Calu3 (cell line): ENCODE measurements at regions of chr2 and their contacts with region 1.

Region 1: DNA sequence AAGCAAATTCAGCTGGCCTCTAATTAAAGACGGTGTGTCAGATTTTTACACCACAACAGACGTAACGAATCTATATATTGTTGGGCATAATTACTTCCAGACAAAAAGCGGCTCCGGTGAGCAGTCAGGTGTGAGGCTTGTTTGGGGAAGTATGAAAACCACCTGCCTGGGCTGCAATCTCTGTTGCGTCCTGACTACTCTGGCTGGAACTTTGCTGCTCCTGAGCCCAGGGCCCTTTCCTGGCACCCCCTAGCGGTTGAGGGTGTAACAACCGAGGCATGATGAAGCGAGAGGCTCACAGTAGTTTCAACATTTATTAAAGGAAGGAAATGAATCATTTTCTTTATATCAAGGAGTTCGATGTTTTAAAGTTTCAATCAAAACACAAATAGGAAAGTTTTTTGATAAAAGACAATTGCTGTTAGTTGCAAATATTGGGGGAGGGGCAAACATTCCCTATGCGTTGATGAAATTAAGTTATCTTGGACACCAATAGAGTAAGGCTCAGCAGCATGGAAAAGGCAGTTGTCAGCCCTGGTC is 10.6 kb upstream of the ITGB6 start:
- DNase-seq: peak; percentile 92
- H3K4me3 Mint-ChIP-seq: peak overlapping the region; percentile 12
- H3K27ac Mint-ChIP-seq: peak overlapping the region; percentile 84
- H3K4me1 Mint-ChIP-seq: peaks cover 76% of the 10 kb centered on the region
- H3K27me3 Mint-ChIP-seq: no peaks in the 10 kb centered on the region
- CTCF ChIP-seq: peak; percentile 83

Region 2: DNA sequence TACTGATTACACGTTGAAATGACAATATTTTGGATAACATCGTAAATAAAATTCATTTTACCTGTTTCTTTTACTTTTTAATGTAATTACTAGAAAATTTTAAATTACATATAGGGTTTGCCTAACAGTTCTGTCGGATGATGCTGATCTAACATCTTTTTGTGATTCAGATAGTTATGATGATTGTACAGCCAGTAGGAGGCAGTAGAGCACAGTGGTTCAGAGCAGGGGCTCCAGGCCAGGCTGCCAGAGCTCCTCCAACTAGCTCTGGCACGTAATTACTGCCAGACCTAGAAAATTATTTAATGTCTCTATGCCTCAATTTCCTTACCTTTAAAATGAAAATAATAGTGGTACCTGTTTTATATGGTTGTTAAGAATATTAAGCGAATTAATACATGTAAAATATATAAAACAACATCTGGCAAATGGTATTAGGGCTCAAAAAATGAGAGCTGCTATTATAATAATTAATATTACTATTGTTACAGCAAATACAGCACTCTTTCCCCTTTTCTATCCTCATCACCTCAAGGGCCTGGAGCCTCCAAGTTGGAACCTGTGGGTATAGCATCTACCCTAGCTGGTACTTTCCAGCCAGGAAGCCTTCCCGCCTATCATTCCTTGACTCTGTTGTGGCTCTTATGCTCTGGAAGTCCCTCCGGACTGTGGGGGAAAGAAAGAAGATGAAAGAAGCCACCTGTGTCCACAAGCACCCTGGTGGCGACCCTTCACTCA is 100.6 kb before region 1 on chr2:
- CTCF ChIA-PET with region 1: no interaction called
- intact Hi-C with region 1: loop called (anchors 2 kb)
- DNase-seq: peak; percentile 75
- H3K4me3 Mint-ChIP-seq: no peak overlapping the region
- H3K27ac Mint-ChIP-seq: no peak overlapping the region
- H3K4me1 Mint-ChIP-seq: no peaks in the 10 kb centered on the region
- H3K27me3 Mint-ChIP-seq: no peaks in the 10 kb centered on the region
- CTCF ChIP-seq: peak; percentile 74

Region 3: GRCh38 chr2:160166002-160166401 is 44.7 kb before region 1 on chr2:
- CTCF ChIA-PET with region 1: interaction called, 3 read pairs
- intact Hi-C with region 1: loop called (anchors 2 kb)
- DNase-seq: no peak
- H3K4me3 Mint-ChIP-seq: no peak overlapping the region
- H3K27ac Mint-ChIP-seq: no peak overlapping the region
- H3K4me1 Mint-ChIP-seq: peaks cover 38% of the 10 kb centered on the region
- H3K27me3 Mint-ChIP-seq: no peaks in the 10 kb centered on the region
- CTCF ChIP-seq: no peak

Region 4: GRCh38 chr2:160224060-160224459 is 13.4 kb after region 1 on chr2:
- CTCF ChIA-PET with region 1: interaction called, 9 read pairs
- intact Hi-C with region 1: loop called (anchors 1 kb)
- DNase-seq: peak; percentile 59
- H3K4me3 Mint-ChIP-seq: peak overlapping the region; percentile 17
- H3K27ac Mint-ChIP-seq: peak overlapping the region; percentile 94
- H3K4me1 Mint-ChIP-seq: peaks cover 99% of the 10 kb centered on the region
- H3K27me3 Mint-ChIP-seq: no peaks in the 10 kb centered on the region
- CTCF ChIP-seq: no peak

Region 5: DNA sequence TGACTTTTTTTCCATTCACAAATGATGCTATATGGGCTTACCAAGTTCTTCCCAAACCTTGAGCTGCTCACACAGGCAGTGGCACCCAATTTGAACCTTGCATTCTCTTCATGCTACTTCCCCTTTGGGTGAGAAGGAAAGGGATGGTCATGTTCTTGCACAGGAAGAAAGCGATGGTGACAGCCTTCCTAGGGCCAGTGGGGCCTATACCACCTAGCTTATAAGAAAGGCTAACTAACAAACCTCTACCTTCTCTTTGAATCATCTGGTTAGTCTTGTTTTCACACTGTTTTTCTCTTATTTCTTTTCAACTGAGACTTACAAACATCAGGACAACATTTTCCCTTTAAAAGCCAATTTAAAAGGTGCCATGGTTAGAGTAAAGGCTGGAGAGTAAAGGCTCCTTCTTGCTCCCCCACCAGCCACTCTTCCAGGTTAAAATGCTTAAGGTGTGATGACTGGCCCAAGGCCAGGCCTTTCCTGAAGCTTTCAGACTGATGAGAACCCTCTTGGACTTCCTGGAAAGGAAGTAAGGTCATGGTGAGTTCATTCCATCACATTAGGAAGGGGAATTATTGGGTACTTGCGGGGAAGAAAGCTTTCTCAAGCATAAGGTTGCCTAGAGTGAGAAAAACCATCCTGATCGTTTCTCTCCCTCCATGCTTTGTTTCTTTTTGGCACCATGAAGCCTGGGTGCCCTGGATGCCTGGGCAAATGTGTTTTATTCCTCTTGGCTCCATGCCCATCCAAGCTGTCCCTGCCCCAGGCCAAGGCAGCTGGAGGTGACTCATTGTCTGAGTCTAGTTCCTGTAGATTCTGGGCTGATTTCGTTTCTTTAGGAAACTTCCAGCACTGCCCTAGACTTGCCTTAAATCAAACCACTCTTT is 30.8 kb after region 1 on chr2:
- CTCF ChIA-PET with region 1: no interaction called
- intact Hi-C with region 1: loop called (anchors 5 kb)
- DNase-seq: peak; percentile 85
- H3K4me3 Mint-ChIP-seq: peak overlapping the region; percentile 6
- H3K27ac Mint-ChIP-seq: peak overlapping the region; percentile 93
- H3K4me1 Mint-ChIP-seq: peaks cover 75% of the 10 kb centered on the region
- H3K27me3 Mint-ChIP-seq: no peaks in the 10 kb centered on the region
- CTCF ChIP-seq: no peak

Region 6: GRCh38 chr2:160252278-160252887 is 41.7 kb after region 1 on chr2:
- CTCF ChIA-PET with region 1: interaction called, 5 read pairs
- intact Hi-C with region 1: loop called (anchors 5 kb)
- DNase-seq: no peak
- H3K4me3 Mint-ChIP-seq: peak overlapping the region; percentile 65
- H3K27ac Mint-ChIP-seq: peak overlapping the region; percentile 80
- H3K4me1 Mint-ChIP-seq: peaks cover 68% of the 10 kb centered on the region
- H3K27me3 Mint-ChIP-seq: no peaks in the 10 kb centered on the region
- CTCF ChIP-seq: peak; percentile 68

Region 7: DNA sequence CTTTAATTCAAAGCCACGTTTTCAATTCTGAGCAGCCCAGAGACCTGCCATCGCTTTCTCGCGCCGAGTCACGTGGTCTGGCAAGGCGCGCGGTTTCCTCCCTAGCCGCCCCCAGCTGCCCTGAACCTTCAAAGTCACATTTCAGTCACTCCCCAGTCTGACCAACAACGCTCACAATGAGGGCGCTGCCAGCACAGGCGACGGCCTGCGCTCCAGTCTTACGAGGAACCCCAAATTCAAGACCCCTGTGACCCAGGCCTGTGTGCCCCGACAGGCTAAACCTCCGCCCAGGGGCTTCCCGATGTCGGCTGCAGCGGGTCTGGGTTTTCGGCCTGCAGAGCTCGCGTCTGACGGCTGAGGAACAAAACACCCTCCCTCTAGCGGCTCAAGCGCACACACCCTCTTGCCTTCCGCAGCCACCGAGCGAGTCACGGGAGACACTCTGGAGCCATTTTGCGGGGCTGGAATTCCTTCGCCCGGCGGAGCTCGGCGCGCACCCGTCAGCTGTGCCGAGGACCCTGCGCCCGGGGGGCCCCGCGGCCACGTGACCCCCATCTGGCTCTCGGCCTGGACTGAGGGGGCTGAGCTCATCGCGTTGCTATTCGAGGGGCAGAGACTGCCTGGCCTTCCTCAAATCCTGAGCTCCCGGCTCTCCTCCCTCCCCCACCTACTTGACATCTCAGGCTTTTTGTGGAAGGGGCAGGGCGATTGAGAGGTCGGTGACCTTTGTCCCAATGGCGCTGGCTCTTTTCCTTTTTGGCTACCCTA is 59.3 kb after region 1 on chr2:
- CTCF ChIA-PET with region 1: interaction called, 29 read pairs
- intact Hi-C with region 1: loop called (anchors 5 kb)
- DNase-seq: peak; percentile 88
- H3K4me3 Mint-ChIP-seq: peak overlapping the region; percentile 76
- H3K27ac Mint-ChIP-seq: peak overlapping the region; percentile 99
- H3K4me1 Mint-ChIP-seq: peaks cover 72% of the 10 kb centered on the region
- H3K27me3 Mint-ChIP-seq: no peaks in the 10 kb centered on the region
- CTCF ChIP-seq: peak; percentile 62

Region 8: DNA sequence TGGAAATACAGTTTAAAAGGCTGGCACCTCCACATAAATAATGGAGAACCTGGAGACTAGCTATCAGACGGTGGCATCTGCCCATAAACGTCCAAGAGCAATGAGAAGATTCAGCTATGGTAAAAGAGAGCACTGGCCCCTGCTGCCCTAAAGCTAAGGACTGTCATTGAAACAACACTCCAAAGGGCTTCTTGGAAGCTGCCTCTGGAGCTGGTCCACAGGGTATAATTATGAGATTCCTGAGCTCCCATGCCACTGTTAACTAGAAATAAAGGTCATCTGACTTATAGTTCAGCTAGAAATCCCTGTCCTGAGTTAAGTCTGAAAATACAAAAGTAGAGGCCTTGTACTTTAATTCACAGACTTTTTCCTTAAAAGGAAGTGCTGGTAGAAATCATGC is 322.8 kb after region 1 on chr2:
- CTCF ChIA-PET with region 1: no interaction called
- intact Hi-C with region 1: no loop called
- DNase-seq: no peak
- H3K4me3 Mint-ChIP-seq: no peak overlapping the region
- H3K27ac Mint-ChIP-seq: no peak overlapping the region
- H3K4me1 Mint-ChIP-seq: peaks cover under 1% of the 10 kb centered on the region
- H3K27me3 Mint-ChIP-seq: no peaks in the 10 kb centered on the region
- CTCF ChIP-seq: no peak